ENCODE measurements at regions of chr5 and their contacts with region 1.

Region 1: GRCh38 chr5:159515909-159516415 is 185.7 kb upstream of the IL12B start:
- DNase-seq: peak; percentile 59
- ATAC-seq: peak; percentile 87

Region 2: GRCh38 chr5:159965031-159965837 is 449.3 kb after region 1 on chr5:
- intact Hi-C with region 1: loop called (anchors 10 kb)
- DNase-seq: peak; percentile 69
- ATAC-seq: peak; percentile 86